ENCODE measurements at regions of chr14 and their contacts with region 1.

Region 1: DNA sequence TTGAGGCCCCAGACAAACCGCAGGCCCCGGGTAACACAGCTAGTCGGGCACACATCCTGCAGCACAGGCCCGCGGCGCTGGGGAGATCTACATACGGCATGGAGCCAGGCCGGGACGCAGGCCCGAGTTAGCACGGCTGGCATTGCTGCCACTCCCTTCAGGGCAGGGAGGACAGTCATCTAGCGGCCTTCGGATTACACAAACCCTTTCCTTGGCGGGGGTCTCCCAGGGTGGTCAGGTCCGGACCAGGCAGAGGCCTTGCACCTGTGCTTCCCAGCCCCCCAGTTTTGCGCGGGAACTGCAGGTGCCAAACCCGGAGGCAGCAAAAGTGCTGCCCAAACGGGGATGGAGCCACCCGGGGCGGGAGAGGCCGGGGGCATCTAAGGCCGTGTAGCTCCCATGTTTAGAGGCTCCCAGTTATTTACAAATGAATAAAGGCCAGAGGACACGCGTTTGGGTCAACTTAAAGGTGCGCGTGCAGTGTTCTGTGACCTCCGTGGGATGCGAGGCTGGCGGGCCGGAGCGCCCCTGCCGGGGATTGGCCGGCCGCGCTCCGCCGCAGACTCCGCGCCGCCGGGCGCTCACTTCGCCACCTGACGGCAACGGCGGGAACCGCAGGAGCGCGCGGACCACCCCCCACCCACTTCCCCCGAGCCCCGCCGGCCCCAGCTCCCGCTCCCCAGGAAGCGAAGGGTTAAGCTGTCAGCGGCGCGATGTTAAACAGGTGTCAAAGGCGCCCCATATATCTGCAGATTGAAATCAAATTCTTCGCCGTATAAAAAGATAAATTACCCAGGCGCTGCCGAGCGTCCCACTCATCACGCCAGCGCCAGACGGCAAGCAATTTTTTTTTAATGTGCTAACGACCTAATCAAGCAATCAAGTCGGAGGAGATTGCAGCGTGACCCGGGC is 18.1 kb downstream of the VSX2 start:
- DNase-seq: peak; percentile 30 to 47
- ATAC-seq: peak; percentile 57 to 90
- H3K4me3 ChIP-seq: peak overlapping the region; percentile 67
- H3K27ac ChIP-seq: peak overlapping the region; percentile 37 to 66; a peak in 5 of 6 replicates
- H3K4me1 ChIP-seq: no peaks in the 10 kb centered on the region; the same call in 2 of the 3 replicates
- CTCF ChIP-seq: peak; percentile 98
- EP300 ChIP-seq: no peak
- POLR2A ChIP-seq: no peak
- RAD21 ChIP-seq: peak; percentile 24 to 60; a peak in 3 of 5 replicates

Region 2: DNA sequence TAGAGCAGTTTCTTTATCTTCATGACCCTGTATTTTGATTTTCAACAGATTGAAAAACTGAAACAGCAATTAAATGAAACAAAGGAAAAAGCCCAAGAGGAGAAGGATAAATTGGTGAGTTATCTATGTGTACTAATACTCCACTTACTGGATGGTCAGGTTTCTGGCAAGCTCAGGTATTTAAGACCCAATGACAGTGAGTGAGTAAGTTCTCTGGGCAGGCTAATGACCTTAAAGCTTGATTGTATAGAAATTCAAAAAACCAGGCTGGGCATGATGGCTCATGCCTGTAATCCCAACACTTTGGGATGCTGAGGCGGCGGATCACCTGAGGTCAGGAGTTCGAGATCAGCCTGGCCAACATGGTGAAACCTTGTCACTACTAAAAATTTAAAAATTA is 228.2 kb before region 1 on chr14:
- CTCF ChIA-PET with region 1: no interaction called
- POLR2A ChIA-PET with region 1: no interaction called
- DNase-seq: no peak
- ATAC-seq: no peak
- H3K4me3 ChIP-seq: no peak overlapping the region
- H3K27ac ChIP-seq: no peak overlapping the region
- H3K4me1 ChIP-seq: no peaks in the 10 kb centered on the region
- CTCF ChIP-seq: no peak
- EP300 ChIP-seq: no peak
- POLR2A ChIP-seq: no peak
- RAD21 ChIP-seq: no peak

Region 3: DNA sequence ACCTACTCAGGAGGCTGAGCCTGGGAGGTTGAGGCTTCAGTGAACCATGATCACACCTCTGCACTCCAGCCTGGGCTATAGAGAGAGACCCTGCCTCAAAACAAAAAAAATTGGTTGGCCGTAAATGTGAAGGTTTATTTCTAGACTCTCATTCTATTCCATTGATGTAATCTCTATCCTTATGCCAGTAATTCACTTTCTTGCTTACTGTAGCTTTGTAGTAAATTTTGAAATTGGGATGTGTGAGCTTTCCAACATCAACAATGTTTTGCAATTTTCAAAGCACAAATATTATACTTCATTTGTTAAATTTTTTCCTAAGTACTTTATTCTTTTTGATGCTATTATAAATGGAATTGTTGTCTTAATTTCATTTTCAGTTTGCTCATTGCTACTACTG is 148.0 kb before region 1 on chr14:
- CTCF ChIA-PET with region 1: interaction called, 53 read pairs
- POLR2A ChIA-PET with region 1: no interaction called
- DNase-seq: no peak
- ATAC-seq: no peak
- H3K4me3 ChIP-seq: no peak overlapping the region
- H3K27ac ChIP-seq: no peak overlapping the region
- H3K4me1 ChIP-seq: no peaks in the 10 kb centered on the region
- CTCF ChIP-seq: no peak
- EP300 ChIP-seq: no peak
- POLR2A ChIP-seq: no peak
- RAD21 ChIP-seq: no peak

Region 4: GRCh38 chr14:74140374-74140850 is 116.9 kb before region 1 on chr14:
- CTCF ChIA-PET with region 1: interaction called, 12 read pairs
- POLR2A ChIA-PET with region 1: no interaction called
- DNase-seq: no peak
- ATAC-seq: no peak
- H3K4me3 ChIP-seq: no peak overlapping the region
- H3K27ac ChIP-seq: no peak overlapping the region
- H3K4me1 ChIP-seq: no peaks in the 10 kb centered on the region
- CTCF ChIP-seq: no peak
- EP300 ChIP-seq: no peak
- POLR2A ChIP-seq: no peak
- RAD21 ChIP-seq: no peak

Region 5: DNA sequence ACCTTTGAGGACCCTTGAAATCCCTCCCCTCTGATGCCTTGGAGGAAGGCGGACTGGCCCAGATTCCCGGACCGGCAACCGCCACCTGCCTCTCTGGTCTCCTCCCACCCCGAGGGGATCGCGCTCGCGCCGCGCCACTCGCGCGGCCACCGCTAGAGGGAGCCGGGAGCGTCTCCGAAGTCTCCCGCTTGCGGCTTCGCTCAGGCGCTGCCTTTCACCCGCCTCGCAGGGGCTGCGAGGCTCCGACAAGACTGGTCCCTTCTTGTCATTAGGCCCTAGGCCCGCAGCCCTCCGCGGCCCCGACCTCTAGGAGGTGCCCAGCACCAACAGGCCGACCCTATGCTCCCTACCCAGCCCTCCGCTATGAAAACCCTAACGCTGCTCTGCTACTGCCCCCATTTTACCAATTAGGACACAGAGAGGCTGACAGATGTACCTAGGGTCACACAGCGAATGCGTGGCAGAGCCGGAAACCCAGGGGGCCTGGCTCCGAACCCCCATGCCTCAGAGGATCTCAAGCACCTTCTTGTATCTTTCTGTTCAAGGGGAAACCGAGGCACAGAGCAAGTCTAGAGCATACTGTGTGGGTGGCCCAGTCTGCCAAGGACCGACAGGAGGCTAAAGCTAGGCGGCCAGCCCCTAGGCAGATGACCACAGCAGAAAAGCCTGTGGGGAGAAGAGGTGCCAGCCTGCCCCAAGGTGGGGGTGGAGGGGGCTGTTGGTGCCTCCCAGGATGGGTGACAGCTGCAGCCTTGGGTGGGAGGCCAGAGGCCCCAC is 39.5 kb before region 1 on chr14:
- CTCF ChIA-PET with region 1: interaction called, 33 read pairs
- POLR2A ChIA-PET with region 1: no interaction called
- DNase-seq: peak; percentile 69 to 90
- ATAC-seq: peak; percentile 95 to 98
- H3K4me3 ChIP-seq: peak overlapping the region; percentile 36
- H3K27ac ChIP-seq: 0 out of 6 replicates have a peak overlapping the region, but pooled peaks of 1 of the 2 experiments have one; percentile 24
- H3K4me1 ChIP-seq: no peaks in the 10 kb centered on the region
- CTCF ChIP-seq: peak; percentile 82
- EP300 ChIP-seq: no peak
- POLR2A ChIP-seq: no peak
- RAD21 ChIP-seq: peak; percentile 51 to 52; a peak in 4 of 5 replicates

Region 6: GRCh38 chr14:74240794-74241651 is 16.3 kb before region 1 on chr14:
- CTCF ChIA-PET with region 1: interaction called, 56 read pairs
- POLR2A ChIA-PET with region 1: no interaction called
- DNase-seq: no peak
- ATAC-seq: peak in 1 of 2 experiments; percentile 30; a peak in 3 of 6 replicates
- H3K4me3 ChIP-seq: 0 out of 3 replicates have a peak overlapping the region, but pooled peaks have one; percentile 8
- H3K27ac ChIP-seq: no peak overlapping the region
- H3K4me1 ChIP-seq: no peaks in the 10 kb centered on the region
- CTCF ChIP-seq: no peak
- EP300 ChIP-seq: no peak
- POLR2A ChIP-seq: no peak
- RAD21 ChIP-seq: no peak

Region 7: DNA sequence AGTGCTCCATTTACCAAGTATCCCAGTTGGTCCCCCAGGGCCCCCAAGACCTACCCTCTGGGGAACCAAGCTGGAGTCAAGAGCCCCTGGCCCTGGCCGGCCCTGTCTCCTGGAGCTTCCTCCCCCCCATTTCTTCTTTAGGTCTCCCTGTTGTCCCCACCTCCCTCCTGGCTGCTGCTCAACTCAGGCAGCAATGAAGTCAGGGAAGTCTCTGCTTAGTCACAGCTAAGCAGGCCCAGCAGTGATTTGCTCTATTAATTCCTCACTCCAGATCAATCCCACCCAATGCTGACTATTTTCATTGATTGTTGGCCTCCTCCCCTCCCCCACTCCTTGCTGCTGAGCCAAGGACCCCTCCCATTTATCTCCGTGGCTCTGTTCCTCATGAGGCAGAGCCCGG is 10.3 kb after region 1 on chr14:
- CTCF ChIA-PET with region 1: interaction called, 21 read pairs
- POLR2A ChIA-PET with region 1: no interaction called
- DNase-seq: no peak
- ATAC-seq: no peak
- H3K4me3 ChIP-seq: no peak overlapping the region
- H3K27ac ChIP-seq: no peak overlapping the region
- H3K4me1 ChIP-seq: peaks cover 9% of the 10 kb centered on the region
- CTCF ChIP-seq: no peak
- EP300 ChIP-seq: no peak
- POLR2A ChIP-seq: no peak
- RAD21 ChIP-seq: no peak

Region 8: DNA sequence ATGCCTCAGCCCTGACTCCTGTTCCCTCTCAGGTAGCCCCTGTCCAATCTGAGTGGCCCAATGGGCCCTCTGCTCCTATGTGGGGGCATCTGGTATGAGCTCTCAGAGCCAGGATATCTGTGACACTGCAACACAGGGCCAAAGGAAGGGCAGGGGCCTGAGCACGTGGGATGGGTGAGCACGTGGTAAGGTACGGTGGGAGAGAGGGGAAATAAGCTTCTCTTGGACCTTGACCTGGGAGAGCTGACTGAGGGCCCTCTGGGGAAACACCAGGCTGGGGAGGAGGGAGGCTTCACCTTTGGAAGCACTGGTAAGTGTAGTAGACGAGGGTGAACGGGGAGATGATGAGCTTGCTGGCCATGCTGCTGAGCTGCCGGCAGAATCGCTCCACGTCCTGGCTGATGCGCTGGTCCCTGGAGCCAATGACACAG is 38.7 kb after region 1 on chr14:
- CTCF ChIA-PET with region 1: interaction called, 41 read pairs
- POLR2A ChIA-PET with region 1: no interaction called
- DNase-seq: no peak
- ATAC-seq: no peak
- H3K4me3 ChIP-seq: no peak overlapping the region
- H3K27ac ChIP-seq: no peak overlapping the region
- H3K4me1 ChIP-seq: no peaks in the 10 kb centered on the region; the same call in 2 of the 3 replicates
- CTCF ChIP-seq: no peak
- EP300 ChIP-seq: no peak
- POLR2A ChIP-seq: no peak
- RAD21 ChIP-seq: no peak

Region 9: GRCh38 chr14:74364271-74364880 is 107.0 kb after region 1 on chr14:
- CTCF ChIA-PET with region 1: no interaction called
- POLR2A ChIA-PET with region 1: no interaction called
- DNase-seq: no peak
- ATAC-seq: peak in 1 of 2 experiments; percentile 25; a peak in 3 of 6 replicates
- H3K4me3 ChIP-seq: no peak overlapping the region
- H3K27ac ChIP-seq: no peak overlapping the region
- H3K4me1 ChIP-seq: no peaks in the 10 kb centered on the region
- CTCF ChIP-seq: no peak
- EP300 ChIP-seq: no peak
- POLR2A ChIP-seq: no peak
- RAD21 ChIP-seq: no peak

Region 10: GRCh38 chr14:74380156-74380555 is 122.8 kb after region 1 on chr14:
- CTCF ChIA-PET with region 1: no interaction called
- POLR2A ChIA-PET with region 1: no interaction called
- DNase-seq: no peak
- ATAC-seq: 0 out of 6 replicates have a peak, but pooled peaks of 1 of the 2 experiments have one; percentile 19
- H3K4me3 ChIP-seq: no peak overlapping the region
- H3K27ac ChIP-seq: no peak overlapping the region
- H3K4me1 ChIP-seq: no peaks in the 10 kb centered on the region
- CTCF ChIP-seq: no peak
- EP300 ChIP-seq: no peak
- POLR2A ChIP-seq: no peak
- RAD21 ChIP-seq: no peak

Measured in A549 (cell line).